Left cardiac atrium (tissue), 4 donors: ENCODE measurements at regions of chr1 and their contacts with region 1.

Region 1: GRCh38 chr1:21344750-21345443 is 54.6 kb upstream of the ECE1 start:
- DNase-seq: peak; percentile 52
- ATAC-seq: peak; percentile 41 to 46

Region 2: DNA sequence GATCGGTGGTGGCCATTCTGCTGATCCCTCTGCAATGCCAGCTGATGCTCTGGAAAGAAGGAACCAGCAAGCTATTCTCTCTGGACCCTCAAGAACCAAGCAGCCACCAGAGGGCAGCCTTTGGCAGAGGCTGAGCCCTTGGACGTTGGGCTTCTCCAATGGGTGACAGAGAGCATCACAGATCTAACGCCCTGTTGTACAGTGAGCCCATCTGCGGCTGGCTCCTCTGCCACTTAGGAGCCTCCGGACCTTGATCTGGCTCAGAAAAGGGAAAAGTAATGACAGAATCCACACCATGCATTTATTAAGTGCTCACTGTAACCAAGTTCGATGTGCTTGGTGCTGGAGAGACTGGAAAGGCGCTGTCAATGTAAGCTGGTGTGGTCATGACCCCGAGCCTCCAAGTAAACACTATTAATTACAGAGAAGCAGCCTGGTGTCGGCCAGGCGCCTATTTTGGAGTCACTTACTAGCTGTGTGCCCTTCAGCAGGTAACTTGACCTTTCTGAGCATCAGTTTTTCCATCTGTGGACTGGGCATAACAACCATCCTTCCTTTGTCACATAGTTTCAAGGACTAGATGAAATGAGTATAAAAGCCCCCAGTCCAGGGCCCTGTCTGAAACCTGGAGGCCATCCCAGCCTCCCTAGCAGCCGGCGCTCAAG is 89.5 kb before region 1 on chr1:
- intact Hi-C with region 1: loop called (anchors 5 kb)
- DNase-seq: peak; percentile 93
- ATAC-seq: peak; percentile 82 to 90

Region 3: DNA sequence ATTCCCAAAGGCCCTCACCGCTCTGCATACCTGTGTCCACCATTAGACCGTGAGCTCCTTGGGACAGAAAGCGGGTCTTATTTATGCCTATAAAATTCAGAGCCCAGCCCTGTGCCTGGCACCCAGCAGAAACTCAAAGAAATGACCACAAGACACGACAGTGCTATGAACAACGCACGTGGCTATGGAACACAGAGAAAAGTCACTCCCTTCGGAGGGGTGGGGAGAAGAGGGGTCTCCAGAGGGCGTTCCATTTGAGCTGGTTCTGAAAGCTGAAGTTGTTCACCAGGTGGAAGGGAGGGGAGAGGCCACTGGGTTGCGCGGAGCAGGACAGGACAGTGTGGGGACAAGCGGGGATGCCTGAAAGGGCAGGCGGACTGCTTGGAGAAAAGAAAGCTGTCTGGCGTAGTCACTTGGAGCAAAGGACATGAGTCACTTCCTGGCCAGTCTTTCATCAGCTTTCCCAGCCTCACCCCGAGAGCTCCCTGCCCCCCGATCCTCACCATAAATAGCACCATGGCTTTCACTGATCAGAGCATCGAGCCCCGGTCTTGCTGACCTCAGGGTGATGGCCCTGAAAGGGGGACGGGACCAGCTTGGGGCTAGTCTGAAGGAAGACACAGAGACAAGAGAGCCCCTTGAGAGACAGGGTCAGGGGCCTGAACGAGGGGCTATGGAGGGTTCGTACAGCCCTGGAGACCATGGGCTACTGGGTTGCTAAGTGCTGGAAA is 83.2 kb before region 1 on chr1:
- intact Hi-C with region 1: loop called (anchors 5 kb)
- DNase-seq: peak; percentile 89
- ATAC-seq: peak; percentile 78 to 85

Region 4: DNA sequence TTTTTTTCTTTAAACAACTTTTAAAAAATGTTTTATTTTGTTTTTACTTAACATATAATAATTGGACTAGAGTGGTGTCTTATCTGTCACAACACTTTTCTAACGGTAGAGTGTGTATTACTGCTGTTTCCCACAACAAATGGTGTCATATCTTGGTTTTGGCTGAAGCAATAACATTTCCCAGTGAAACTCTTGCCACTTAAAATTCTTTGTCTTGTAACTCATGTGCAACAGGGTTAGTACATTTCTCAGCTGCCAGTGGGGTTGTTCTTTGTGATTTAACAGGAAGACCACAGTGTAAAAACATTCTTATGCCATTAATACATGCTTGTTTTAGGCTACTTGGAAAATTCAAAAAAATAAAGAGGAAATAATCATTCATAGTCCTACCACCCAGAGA is 207.8 kb after region 1 on chr1:
- intact Hi-C with region 1: no loop called
- DNase-seq: no peak
- ATAC-seq: peak; percentile 74 to 81